Pancreas (tissue), 10 donors: ENCODE measurements at regions of chr1 and their contacts with region 1.

Region 1: GRCh38 chr1:116151739-116152576 is 40.8 kb downstream of the MAB21L3 start:
- DNase-seq: peak; percentile 66 to 91 (median 79)
- ATAC-seq: peak; percentile 95 to 98 (median 96)
- H3K4me3 ChIP-seq: peak overlapping the region in 3 of 4 donors; percentile 3 to 41 (median 26)
- H3K27ac ChIP-seq: peak overlapping the region; percentile 40 to 85 (median 68)
- H3K4me1 ChIP-seq: peaks cover 16 to 20% (median 18%) of the 10 kb centered on the region in 3 donors
- H3K27me3 ChIP-seq: no peaks in the 10 kb centered on the region
- CTCF ChIP-seq: peak; percentile 91 to 94 (median 93)

Region 2: DNA sequence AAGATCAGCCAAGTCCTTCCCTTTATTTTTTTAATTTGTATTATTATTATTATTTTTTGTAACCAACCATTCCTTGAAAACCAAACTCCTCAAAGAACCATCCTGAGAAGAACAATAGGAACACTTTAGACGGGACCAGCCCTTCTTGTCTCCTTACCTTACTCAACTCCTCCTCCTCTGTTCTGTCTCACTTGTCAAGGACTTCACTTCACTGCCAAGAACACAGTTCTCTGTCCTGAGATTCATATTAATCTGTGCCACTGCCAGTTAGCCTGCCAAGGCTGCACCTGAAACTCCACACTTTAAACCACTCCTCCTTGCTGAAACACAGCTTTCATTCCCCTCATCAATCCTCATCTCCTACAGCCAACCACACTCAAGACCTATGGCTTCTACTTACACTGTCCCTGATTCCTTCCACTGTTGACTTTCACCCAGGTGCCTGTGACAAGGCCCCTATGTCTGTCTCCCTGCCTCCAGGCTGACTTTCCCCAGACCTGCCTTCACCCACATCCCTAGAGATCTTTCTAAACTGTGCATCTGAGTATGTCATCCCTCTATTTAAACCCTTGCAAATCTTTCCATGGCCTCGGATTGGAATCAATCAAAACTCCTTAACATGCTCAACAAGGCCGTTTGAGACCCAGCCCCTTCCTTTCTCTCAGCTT is 147.4 kb after region 1 on chr1:
- intact Hi-C with region 1: no loop called
- DNase-seq: no peak
- ATAC-seq: peak; percentile 43 to 86 (median 76)
- H3K4me3 ChIP-seq: no peak overlapping the region
- H3K27ac ChIP-seq: peak overlapping the region in 1 of 4 donors; percentile 27
- H3K4me1 ChIP-seq: peaks cover 5 to 12% (median 7%) of the 10 kb centered on the region in 3 donors
- H3K27me3 ChIP-seq: no peaks in the 10 kb centered on the region
- CTCF ChIP-seq: no peak

Region 3: GRCh38 chr1:116372587-116373444 is 220.9 kb after region 1 on chr1 and contains the start of gene ATP1A1:
- intact Hi-C with region 1: loop called in 1 of 3 experiments (anchors 10 kb)
- DNase-seq: peak; percentile 98 to 100 (median 99)
- ATAC-seq: peak; percentile 83 to 87 (median 86)
- H3K4me3 ChIP-seq: peak within 1 kb of the TSS; percentile 82 to 96 (median 91)
- H3K27ac ChIP-seq: peak within 1 kb of the TSS; percentile 91 to 96 (median 94)
- H3K4me1 ChIP-seq: peaks cover 9 to 29% (median 21%) of the 10 kb centered on the region in 3 donors
- H3K27me3 ChIP-seq: no peaks in the 10 kb centered on the region
- CTCF ChIP-seq: no peak
- total RNA-seq, gene ATP1A1: 338 to 735 (median 584) TPM

Region 4: DNA sequence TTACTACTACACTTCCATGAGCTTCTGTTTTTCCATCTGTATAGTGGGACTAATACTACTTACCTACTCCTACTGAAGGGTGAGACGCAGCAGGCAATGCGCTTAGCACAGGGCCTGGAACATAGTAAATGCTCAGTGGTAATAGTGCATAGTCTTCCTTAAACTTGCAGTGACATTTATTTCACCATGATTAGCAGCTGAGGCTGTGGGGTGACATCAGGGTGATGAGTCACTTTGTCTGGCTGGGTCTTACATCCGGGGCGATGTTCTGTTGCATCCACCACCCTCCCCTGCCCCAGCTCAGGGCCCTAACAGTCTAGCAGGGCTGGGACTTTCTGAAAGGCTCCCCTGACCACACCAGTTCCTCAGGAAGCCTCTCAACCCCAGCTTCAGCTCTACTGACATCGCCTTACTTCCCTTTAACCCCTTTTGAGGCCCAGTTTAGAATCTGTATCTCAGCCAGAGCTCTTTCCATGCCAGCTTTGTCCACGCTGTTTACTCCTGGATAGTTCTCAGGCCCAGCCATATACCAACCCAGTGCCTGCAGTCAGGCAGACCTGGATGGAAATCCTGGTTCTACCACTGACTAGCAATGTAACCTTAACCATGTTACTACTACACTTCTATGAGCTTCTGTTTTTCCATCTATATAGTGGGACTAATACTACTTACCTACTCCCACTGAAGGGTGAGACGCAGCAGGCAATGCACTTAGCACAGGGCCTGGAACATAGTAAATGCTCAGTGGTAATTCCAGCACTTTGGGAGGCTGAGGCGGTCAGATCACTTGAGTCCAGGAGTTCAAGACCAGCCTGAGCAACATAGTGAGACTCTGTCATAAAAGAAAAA is 352.6 kb after region 1 on chr1:
- intact Hi-C with region 1: loop called in 1 of 3 experiments (anchors 5 kb)
- DNase-seq: peak in 1 of 6 donors; percentile 70
- ATAC-seq: peak in 3 of 4 donors; percentile 67 to 91 (median 87)
- H3K4me3 ChIP-seq: no peak overlapping the region
- H3K27ac ChIP-seq: peak overlapping the region in 2 of 4 donors; percentile 35 to 42
- H3K4me1 ChIP-seq: no peaks in the 10 kb centered on the region
- H3K27me3 ChIP-seq: no peaks in the 10 kb centered on the region
- CTCF ChIP-seq: no peak